ENCODE measurements at regions of chr14 and their contacts with region 1.

Region 1: DNA sequence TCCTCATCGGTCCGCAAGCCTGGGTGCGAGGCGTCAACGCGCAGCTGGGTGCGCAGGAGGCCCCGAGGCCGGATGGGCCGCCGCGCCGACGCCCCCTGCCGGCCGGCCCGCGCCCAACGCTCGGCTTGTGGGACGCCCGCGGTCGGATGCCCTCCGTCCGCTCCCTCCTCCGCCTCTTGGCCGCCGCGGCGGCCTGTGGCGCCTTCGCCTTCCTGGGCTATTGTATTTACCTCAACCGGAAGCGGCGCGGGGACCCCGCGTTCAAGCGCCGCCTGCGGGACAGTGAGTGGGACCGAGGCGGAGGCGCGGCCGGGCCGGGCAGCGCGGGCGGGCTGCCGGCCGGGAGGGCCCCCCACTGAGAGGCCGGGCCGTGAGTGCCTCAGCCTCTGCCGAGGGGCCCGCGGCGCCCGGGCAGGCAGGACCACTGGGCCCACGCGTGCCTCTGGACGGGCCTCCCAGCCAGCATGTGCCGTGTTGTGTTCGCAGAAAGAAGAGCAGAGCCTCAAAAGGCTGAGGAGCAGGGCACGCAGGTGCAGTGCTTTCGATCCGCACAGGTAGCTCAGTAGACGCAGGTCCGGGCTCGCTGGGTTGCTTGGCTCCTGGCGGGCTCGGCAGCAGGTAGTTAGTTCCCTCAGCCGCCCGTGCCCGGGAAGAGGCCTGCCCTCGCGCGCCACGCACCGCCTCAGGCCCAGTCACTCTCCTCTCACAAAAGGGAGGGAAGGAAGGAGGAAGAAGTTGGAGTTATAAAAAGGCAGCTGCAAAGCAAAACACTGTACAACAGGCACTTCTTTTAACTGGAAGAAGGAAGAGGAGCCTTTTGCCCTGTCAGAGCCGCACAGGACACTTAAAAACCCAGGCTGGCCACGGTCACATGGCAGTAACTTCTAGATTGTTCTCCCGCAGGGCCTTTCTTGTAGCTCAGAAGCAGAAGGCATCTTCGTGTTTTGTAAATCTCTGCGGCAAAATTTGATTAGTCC is at the start of gene TOMM20L:
- DNase-seq: peak; percentile 73
- ATAC-seq: peak; percentile 90
- H3K4me3 Mint-ChIP-seq: peak within 1 kb of the TSS; percentile 67
- H3K27ac Mint-ChIP-seq: peak within 1 kb of the TSS; percentile 72
- H3K4me1 Mint-ChIP-seq: peaks cover 8% of the 10 kb centered on the region
- H3K27me3 Mint-ChIP-seq: no peaks in the 10 kb centered on the region
- CTCF ChIP-seq: peak; percentile 86
- total RNA-seq, gene TOMM20L: not detected

Region 2: GRCh38 chr14:58107947-58108552 is 288.1 kb before region 1 on chr14:
- CTCF ChIA-PET with region 1: interaction called, 4 read pairs
- POLR2A ChIA-PET with region 1: no interaction called
- intact Hi-C with region 1: loop called (anchors 5 kb)
- DNase-seq: peak; percentile 60
- ATAC-seq: peak; percentile 49
- H3K4me3 Mint-ChIP-seq: no peak overlapping the region
- H3K27ac Mint-ChIP-seq: no peak overlapping the region
- H3K4me1 Mint-ChIP-seq: no peaks in the 10 kb centered on the region
- H3K27me3 Mint-ChIP-seq: peaks cover 15% of the 10 kb centered on the region
- CTCF ChIP-seq: peak; percentile 84

Region 3: DNA sequence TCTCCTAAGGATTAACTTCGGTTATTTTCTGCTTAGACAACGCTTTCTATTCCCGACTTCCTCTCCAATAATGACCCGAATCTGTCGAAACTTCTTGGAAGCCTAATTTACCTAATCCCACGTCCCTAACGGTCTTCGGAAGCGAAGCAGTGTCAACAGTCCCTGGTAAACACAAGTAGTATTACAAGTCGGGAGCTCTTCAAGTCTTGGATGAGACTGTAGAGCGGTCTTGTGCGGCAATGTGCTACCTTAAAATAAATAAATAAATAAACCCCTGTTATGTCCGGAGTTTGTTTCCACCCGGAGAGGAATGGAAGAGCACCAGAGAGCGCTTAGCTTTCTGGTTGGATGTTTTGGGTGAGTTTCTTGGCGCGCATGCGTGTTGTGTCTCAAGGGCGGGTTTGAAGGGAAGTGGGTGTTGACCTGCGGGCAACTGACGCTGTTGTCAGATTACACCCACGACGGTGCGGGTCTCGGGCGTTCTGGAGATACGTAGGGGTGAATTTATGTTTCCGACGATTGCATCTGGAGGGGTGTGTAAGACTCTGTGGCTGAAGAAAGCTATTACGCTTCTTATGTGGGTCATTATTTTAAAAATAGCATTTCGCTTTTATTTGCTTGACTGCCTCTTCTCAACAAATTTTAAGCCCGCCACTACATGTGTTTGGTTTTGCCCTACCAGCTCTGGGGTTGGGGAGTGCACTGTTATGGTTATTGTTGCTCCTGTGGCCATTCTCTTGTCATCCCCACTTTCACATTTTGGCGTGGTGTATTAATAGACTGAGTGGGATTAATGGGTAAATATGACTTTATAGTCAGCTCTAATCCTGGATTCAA is 31.4 kb after region 1 on chr14 and contains the starts of genes KIAA0586 and TIMM9:
- CTCF ChIA-PET with region 1: interaction called, 12 read pairs
- POLR2A ChIA-PET with region 1: interaction called, 10 read pairs
- intact Hi-C with region 1: no loop called
- DNase-seq: peak; percentile 98
- ATAC-seq: peak; percentile 91
- H3K4me3 Mint-ChIP-seq: peak within 1 kb of the TSS; percentile 88
- H3K27ac Mint-ChIP-seq: peak within 1 kb of the TSS; percentile 99
- H3K4me1 Mint-ChIP-seq: peaks cover 33% of the 10 kb centered on the region
- H3K27me3 Mint-ChIP-seq: no peaks in the 10 kb centered on the region
- CTCF ChIP-seq: no peak
- total RNA-seq, gene KIAA0586: 23.4 TPM
- total RNA-seq, gene TIMM9: 63.9 to 71.8 TPM

Measured in activated CD8-positive, alpha-beta T cell treated with anti-CD3 and anti-CD28 coated beads for 36 hours (primary cell).